Panc1 (cell line): ENCODE measurements at regions of chr20 and their contacts with region 1.

Region 1: GRCh38 chr20:52601295-52601971 is 370.7 kb upstream of the TSHZ2 start:
- DNase-seq: no peak
- ATAC-seq: no peak
- H3K4me3 ChIP-seq: no peak overlapping the region
- H3K27ac ChIP-seq: no peak overlapping the region
- H3K4me1 ChIP-seq: no peaks in the 10 kb centered on the region
- H3K27me3 ChIP-seq: no peaks in the 10 kb centered on the region
- CTCF ChIP-seq: no peak

Region 2: DNA sequence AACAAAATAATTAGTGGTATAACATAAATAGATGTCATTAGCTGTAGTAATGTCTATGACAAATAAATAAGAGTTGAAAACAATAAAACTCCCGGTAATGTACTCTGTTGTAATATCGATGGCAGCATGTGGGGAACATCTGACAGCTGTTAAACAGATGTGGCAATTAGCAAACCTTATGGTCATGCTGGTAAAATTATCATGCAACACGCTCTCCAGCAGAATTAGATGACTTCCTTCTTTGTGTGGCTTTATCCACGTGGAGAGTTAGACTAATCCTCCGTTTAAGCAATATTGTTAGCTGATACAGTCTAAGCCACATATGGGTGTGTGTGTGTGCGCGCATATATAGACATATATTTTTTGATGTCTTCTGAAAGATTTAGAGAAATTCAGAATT is 332.1 kb before region 1 on chr20:
- CTCF ChIA-PET with region 1: no interaction called
- POLR2A ChIA-PET with region 1: no interaction called
- in situ Hi-C with region 1: no loop called
- intact Hi-C with region 1: no loop called
- DNase-seq: no peak
- ATAC-seq: no peak
- H3K4me3 ChIP-seq: no peak overlapping the region
- H3K27ac ChIP-seq: no peak overlapping the region
- H3K4me1 ChIP-seq: no peaks in the 10 kb centered on the region
- H3K27me3 ChIP-seq: no peaks in the 10 kb centered on the region; the same call in 1 of the 2 replicates
- CTCF ChIP-seq: no peak

Region 3: GRCh38 chr20:52340036-52340648 is 261.3 kb before region 1 on chr20:
- CTCF ChIA-PET with region 1: no interaction called
- POLR2A ChIA-PET with region 1: no interaction called
- in situ Hi-C with region 1: no loop called
- intact Hi-C with region 1: no loop called
- DNase-seq: no peak
- ATAC-seq: no peak
- H3K4me3 ChIP-seq: peak overlapping the region in 1 of 2 experiments; percentile 16; a peak in 2 of 4 replicates
- H3K27ac ChIP-seq: no peak overlapping the region
- H3K4me1 ChIP-seq: no peaks in the 10 kb centered on the region
- H3K27me3 ChIP-seq: no peaks in the 10 kb centered on the region
- CTCF ChIP-seq: no peak

Region 4: DNA sequence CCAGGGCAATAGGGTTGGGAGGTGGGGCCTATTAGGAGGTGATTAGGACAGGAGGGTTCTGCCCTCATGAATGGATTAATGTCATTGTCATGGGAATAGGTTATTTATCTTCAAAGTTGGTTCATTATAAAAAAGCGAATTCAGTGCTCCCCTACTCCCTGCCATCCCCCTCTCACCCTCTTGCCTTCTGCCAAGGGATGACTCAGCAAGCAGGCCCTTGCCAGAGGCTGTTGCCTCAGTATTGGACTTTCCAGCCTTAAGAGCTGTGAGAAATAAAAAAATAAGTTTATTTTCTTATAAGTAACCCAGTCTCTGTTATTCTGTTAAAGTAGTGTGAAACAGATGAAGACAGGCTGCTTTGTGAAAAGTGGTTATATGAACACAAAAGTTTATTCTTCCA is 28.7 kb before region 1 on chr20:
- CTCF ChIA-PET with region 1: no interaction called
- POLR2A ChIA-PET with region 1: interaction called, 14 read pairs
- in situ Hi-C with region 1: no loop called
- intact Hi-C with region 1: no loop called
- DNase-seq: no peak
- ATAC-seq: no peak
- H3K4me3 ChIP-seq: no peak overlapping the region
- H3K27ac ChIP-seq: no peak overlapping the region
- H3K4me1 ChIP-seq: no peaks in the 10 kb centered on the region
- H3K27me3 ChIP-seq: no peaks in the 10 kb centered on the region; the same call in 1 of the 2 replicates
- CTCF ChIP-seq: no peak

Region 5: DNA sequence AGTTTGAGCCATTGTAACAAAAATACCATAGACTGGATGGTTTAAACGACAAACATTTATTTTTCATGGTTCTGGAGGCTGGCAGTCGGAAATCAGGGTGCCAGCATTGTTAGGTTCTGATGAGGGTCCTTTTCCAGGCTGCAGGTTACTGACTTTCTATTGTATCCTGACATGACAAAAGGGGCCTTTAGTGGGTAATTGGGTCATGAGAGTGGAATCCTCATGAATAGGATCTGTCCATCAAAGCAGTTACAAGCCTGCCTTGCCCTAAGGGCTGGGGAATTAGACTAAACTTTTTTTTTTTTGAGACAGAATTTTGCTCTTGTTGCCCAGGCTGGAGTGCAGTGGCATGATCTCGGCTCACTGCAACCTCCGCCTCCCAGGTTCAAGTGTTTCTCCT is 22.8 kb after region 1 on chr20:
- CTCF ChIA-PET with region 1: no interaction called
- POLR2A ChIA-PET with region 1: no interaction called
- in situ Hi-C with region 1: no loop called
- intact Hi-C with region 1: no loop called
- DNase-seq: no peak
- ATAC-seq: no peak
- H3K4me3 ChIP-seq: no peak overlapping the region
- H3K27ac ChIP-seq: no peak overlapping the region
- H3K4me1 ChIP-seq: no peaks in the 10 kb centered on the region
- H3K27me3 ChIP-seq: no peaks in the 10 kb centered on the region
- CTCF ChIP-seq: no peak